Calu3 (cell line): ENCODE measurements at regions of chr11 and their contacts with region 1.

Region 1: DNA sequence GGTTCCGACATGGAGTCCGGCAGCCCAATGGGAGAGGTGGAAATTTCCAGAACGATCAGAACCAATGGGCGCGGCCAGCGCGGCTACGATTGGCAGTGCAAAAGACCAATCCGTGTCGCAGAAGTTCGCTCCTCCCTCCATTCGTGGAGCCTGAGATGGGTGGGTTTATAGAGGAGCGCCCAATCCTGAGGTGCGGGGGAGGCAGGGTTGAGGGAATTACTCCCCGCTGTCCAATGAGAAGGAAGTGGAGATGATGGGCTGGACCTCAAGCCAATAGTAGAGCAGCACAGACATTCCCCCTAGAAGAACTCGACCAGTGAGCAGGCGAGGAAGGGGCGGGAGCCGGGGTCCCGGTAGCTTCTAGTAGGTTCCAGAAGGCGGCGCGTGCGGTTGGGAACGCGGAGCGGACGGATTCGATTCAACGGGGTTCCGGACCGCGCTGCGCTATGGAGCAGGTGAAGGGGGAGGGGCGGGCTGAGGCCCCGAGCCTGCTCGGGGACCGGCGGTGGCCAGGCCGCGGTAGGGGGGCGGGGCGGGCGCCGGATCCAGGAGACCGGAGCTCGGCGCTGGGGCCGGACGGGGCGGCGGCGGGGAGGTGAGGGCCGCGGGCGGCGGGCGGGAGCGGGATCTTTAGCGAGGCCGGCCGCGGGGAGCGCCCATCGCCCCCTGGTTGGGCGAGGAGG is at the start of gene STIP1:
- DNase-seq: peak; percentile 97
- H3K4me3 Mint-ChIP-seq: no peak within 1 kb of the TSS
- H3K27ac Mint-ChIP-seq: no peak within 1 kb of the TSS
- H3K4me1 Mint-ChIP-seq: peaks cover 27% of the 10 kb centered on the region
- H3K27me3 Mint-ChIP-seq: no peaks in the 10 kb centered on the region
- CTCF ChIP-seq: no peak
- total RNA-seq, gene STIP1: 344 and 391 TPM in 2 replicates

Region 2: DNA sequence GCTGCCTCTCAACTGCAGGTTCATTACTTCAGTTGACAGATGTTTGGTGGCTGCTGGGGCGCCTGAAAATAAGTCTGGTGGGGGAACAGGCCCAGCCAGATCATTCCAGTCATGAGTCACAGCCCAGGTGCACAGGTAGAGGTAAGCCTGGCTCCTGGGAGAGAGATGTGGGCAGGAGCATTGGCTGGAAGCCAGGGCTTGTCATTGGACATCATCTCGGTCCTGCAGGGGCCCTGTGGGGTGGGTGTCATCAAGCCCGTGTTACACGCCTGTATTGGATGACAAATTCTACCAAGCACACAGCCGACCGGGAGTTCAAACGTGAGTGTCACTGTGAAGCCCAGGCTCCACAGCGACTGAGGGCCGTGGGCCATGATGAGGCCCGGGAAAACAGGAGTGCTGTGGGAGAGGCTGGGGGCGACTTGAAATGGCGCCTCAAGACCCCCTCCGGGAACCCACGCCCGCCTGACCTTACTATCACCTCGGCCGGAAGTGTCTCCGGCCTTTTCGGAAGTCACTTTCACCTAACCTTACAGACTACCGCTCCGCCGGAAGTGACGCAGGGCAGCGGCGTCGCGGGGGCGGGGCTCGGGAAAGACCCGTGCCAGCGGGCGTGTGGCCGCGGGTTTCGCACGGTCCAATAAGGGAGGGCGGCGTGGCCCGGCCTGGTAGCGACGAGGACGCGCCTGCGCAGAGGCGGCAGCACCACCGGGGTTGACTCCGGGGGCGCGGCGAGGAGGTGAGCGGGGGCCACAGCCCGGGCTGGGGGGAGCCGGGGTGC is 54.6 kb after region 1 on chr11 and contains the start of gene FKBP2:
- CTCF ChIA-PET with region 1: no interaction called
- intact Hi-C with region 1: loop called (anchors 2 kb)
- DNase-seq: peak; percentile 98
- H3K4me3 Mint-ChIP-seq: peak within 1 kb of the TSS; percentile 96
- H3K27ac Mint-ChIP-seq: peak within 1 kb of the TSS; percentile 89
- H3K4me1 Mint-ChIP-seq: peaks cover 42% of the 10 kb centered on the region
- H3K27me3 Mint-ChIP-seq: no peaks in the 10 kb centered on the region
- CTCF ChIP-seq: no peak
- total RNA-seq, gene FKBP2: 87.4 and 91.3 TPM in 2 replicates